A549 (cell line): ENCODE measurements at regions of chr1 and their contacts with region 1.

Region 1: GRCh38 chr1:205440476-205441317 is 15.1 kb downstream of the BLACAT1 start:
- DNase-seq: peak in 1 of 2 experiments; percentile 53
- ATAC-seq: peak; percentile 31 to 50; a peak in 5 of 6 replicates
- H3K4me3 ChIP-seq: no peak overlapping the region
- H3K27ac ChIP-seq: peak overlapping the region in 1 of 2 experiments; percentile 24; a peak in 2 of 6 replicates
- H3K4me1 ChIP-seq: peaks cover 16% of the 10 kb centered on the region
- CTCF ChIP-seq: no peak
- EP300 ChIP-seq: no peak
- POLR2A ChIP-seq: no peak
- RAD21 ChIP-seq: no peak

Region 2: DNA sequence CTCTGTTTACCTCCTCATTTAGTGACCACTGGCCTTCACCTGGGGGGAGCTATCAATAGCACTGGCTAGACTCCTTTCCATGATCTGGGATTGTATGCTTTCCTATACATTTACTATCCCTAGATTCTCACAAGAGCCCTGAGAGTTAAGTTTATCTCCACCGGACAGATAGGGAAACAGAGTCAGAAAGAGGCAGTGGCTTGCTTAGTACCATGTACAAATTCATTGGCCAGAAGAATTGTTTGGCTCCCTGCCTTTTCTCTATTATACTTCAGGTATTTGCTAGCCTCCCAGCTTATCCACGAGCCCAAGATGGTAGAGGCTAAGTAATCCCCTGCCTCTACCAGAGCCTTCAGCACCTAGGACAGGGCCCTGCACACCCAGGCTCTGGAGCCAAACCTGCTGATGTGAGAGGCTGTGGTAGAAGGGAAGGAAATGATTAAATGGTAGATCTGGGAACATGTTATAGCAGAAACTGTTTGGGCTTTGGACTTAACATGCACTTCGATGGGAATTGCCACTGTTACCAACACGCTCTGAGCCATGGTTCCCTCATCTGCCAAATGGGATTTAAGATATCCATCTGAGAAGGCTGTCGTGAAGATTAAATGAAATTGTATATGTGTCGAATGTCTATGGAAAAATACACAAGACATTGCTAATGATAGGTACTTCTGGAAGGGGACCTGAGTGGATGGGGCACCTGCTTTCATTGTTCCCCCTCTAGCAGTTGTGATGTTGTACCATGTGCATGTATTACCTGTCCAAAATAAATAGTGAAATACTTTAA is 18.3 kb after region 1 on chr1:
- CTCF ChIA-PET with region 1: interaction called, 14 read pairs
- POLR2A ChIA-PET with region 1: no interaction called
- DNase-seq: peak in 1 of 2 experiments; percentile 43
- ATAC-seq: peak; percentile 60 to 68; a peak in 5 of 6 replicates
- H3K4me3 ChIP-seq: no peak overlapping the region
- H3K27ac ChIP-seq: no peak overlapping the region
- H3K4me1 ChIP-seq: peaks cover 15% of the 10 kb centered on the region
- CTCF ChIP-seq: no peak
- EP300 ChIP-seq: no peak
- POLR2A ChIP-seq: no peak
- RAD21 ChIP-seq: no peak

Region 3: DNA sequence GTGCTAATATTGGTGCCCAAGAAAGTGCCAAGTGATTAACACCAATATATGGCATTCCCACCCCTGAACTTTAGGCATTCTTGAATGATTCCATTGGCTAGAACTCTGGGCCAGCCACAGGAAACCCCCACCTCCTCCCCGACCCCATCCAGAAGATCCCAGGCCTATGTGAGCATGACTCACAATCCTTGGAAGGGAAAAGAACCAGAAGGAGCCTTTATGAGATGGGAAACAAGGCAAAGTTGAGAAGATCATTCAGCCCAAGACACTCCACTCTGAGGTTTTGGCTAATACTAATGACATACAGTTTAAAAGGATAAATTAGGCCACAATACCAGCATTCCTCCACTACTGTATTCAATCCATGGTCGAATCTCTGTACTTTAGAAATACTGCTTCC is 169.3 kb after region 1 on chr1:
- CTCF ChIA-PET with region 1: no interaction called
- POLR2A ChIA-PET with region 1: no interaction called
- DNase-seq: no peak
- ATAC-seq: peak in 1 of 2 experiments; percentile 40; a peak in 2 of 6 replicates
- H3K4me3 ChIP-seq: no peak overlapping the region
- H3K27ac ChIP-seq: no peak overlapping the region
- H3K4me1 ChIP-seq: peaks cover 9% of the 10 kb centered on the region
- CTCF ChIP-seq: no peak
- EP300 ChIP-seq: no peak
- POLR2A ChIP-seq: no peak
- RAD21 ChIP-seq: no peak